Panc1 (cell line): ENCODE measurements at regions of chr3 and their contacts with region 1.

Region 1: DNA sequence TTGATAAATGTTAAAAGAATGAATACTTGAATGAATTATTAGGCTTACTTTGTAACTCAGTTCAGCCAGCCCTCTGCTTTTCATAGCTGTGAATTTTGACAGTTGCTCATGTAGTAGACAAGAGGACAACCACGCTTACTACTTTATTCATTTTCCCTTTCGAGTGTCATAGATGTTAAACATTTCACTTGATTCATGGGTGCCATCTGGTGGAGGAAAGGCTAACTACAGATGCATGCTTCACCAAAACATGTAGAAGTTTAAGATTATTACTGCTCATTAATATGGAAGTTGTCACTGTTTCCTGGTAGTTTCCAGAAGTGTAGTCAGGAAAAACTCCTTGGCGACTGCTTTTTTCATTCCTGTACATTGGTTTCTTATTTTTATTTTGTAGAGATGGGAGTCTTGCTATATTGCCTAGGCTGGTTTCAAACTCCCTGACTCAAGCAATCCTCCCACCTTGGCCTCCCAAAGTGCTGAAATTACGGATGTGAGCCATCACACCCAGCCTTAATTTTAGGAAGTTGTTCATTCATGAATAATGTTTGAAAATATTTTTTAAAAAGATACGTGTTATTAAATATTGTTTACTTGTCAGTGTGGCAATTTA is 163.2 kb downstream of the B3GALNT1 start:
- DNase-seq: peak; percentile 78
- ATAC-seq: peak; percentile 87
- H3K4me3 ChIP-seq: no peak overlapping the region
- H3K27ac ChIP-seq: no peak overlapping the region
- H3K4me1 ChIP-seq: no peaks in the 10 kb centered on the region
- H3K27me3 ChIP-seq: no peaks in the 10 kb centered on the region
- CTCF ChIP-seq: peak; percentile 83

Region 2: DNA sequence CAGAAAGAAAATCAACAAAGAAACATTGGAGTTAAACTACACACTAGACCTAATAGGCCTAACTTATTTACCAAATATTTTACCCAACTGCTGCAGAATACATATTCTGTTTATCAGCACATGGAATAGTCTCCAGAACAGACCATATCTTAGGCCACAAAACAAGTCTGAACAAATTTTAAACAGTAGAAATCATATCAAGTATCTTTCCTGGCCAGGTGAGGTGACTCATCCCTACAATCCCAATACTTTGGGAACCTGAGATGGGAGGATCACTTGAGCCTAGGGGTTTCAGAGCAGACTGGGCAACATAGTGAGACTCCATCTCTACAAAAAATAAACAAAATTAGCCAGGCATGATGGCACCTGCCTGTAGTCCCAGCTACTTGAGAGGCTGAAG is 358.5 kb before region 1 on chr3:
- CTCF ChIA-PET with region 1: no interaction called
- POLR2A ChIA-PET with region 1: no interaction called
- in situ Hi-C with region 1: no loop called
- intact Hi-C with region 1: loop called (anchors 5 kb)
- DNase-seq: no peak
- ATAC-seq: no peak
- H3K4me3 ChIP-seq: no peak overlapping the region
- H3K27ac ChIP-seq: no peak overlapping the region
- H3K4me1 ChIP-seq: no peaks in the 10 kb centered on the region
- H3K27me3 ChIP-seq: no peaks in the 10 kb centered on the region
- CTCF ChIP-seq: no peak

Region 3: DNA sequence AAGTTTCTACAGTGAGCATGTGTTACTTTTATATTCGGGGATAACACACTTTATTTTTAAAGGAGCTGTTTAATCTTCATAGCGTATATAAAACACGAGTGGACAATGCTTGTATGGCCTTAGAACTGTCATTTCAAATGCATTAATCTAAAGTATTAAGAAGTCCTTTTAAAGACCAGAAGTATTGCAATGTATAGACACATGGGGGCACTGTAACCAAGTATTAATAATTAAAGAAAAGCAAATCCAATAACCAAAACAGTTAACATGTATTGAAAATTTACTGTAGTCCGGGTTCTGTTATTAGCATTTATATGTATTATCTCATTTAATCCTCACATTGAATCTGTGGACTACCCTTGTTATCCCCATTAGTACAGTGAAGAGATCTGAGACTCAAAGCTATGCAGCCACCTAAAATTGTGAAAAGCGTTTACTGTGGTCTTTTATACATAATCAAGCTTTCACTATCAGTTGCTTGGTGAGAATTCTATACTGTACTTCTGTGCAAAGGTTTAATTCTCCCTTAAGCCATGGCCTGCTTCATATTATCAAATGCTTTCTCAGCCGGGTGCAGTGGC is 254.9 kb before region 1 on chr3:
- CTCF ChIA-PET with region 1: interaction called, 8 read pairs
- POLR2A ChIA-PET with region 1: no interaction called
- in situ Hi-C with region 1: no loop called
- intact Hi-C with region 1: loop called (anchors 5 kb)
- DNase-seq: no peak
- ATAC-seq: 0 out of 2 replicates have a peak, but pooled peaks have one; percentile 59
- H3K4me3 ChIP-seq: no peak overlapping the region
- H3K27ac ChIP-seq: no peak overlapping the region
- H3K4me1 ChIP-seq: peaks cover 9% of the 10 kb centered on the region; the same call in 1 of the 2 replicates
- H3K27me3 ChIP-seq: no peaks in the 10 kb centered on the region
- CTCF ChIP-seq: peak; percentile 60; the same call in 1 of the 2 replicates

Region 4: DNA sequence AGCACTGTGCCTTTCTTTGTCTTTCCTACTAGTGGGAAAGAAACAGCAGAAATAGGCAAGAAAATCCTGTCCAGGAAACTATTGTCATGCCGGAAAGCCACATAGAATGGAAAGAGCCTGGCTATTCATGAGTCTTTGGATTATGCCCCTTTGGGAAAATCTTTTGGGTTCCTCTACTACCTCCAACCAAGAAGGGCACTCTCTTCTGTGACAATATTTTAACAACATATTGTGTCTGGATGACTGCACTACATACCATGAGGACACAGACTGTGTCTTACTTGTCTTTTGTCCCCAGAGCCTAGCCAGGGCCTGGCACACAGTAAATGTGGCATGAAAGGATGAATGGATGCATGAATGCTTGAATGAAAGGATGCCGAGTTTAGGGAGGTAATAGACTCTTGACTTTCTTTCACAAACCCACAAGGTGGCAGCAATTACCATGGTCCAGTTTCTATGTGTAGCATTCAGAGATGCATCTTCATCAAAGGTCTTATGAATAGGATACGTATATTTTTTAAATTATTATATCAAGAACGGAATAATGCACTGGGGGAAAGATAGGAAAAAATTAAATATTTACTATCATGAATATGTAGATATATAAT is 234.7 kb before region 1 on chr3:
- CTCF ChIA-PET with region 1: interaction called, 4 read pairs
- POLR2A ChIA-PET with region 1: no interaction called
- in situ Hi-C with region 1: no loop called
- intact Hi-C with region 1: loop called (anchors 1 kb)
- DNase-seq: peak; percentile 38
- ATAC-seq: peak; percentile 97
- H3K4me3 ChIP-seq: no peak overlapping the region
- H3K27ac ChIP-seq: peak overlapping the region; percentile 3; the same call in 1 of the 2 replicates
- H3K4me1 ChIP-seq: no peaks in the 10 kb centered on the region
- H3K27me3 ChIP-seq: no peaks in the 10 kb centered on the region; the same call in 1 of the 2 replicates
- CTCF ChIP-seq: peak; percentile 81

Region 5: GRCh38 chr3:160801386-160802118 is 140.4 kb before region 1 on chr3:
- CTCF ChIA-PET with region 1: no interaction called
- POLR2A ChIA-PET with region 1: no interaction called
- in situ Hi-C with region 1: no loop called
- intact Hi-C with region 1: no loop called
- DNase-seq: no peak
- ATAC-seq: peak; percentile 64
- H3K4me3 ChIP-seq: no peak overlapping the region
- H3K27ac ChIP-seq: peak overlapping the region; percentile 60
- H3K4me1 ChIP-seq: peaks cover 18% of the 10 kb centered on the region
- H3K27me3 ChIP-seq: no peaks in the 10 kb centered on the region
- CTCF ChIP-seq: no peak

Region 6: DNA sequence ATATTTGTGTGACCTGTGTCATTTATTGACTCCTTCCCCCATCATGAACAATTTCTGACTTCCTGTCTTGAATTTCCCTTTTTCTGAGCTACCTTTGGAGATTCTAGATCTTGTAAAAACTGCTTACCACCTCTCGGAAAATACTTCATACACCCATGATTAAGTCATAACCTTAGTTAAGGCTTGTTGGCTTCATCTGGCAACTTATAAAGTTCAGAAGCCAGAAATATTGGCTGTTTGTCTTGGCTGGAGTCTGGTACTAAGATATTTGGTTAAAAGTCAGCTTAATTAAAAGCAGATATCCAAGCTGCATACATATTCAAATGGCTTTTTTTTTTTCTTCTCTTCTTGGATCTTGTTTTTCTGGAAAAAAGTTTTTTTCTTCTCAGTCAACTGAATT is 200.5 kb after region 1 on chr3:
- CTCF ChIA-PET with region 1: no interaction called
- POLR2A ChIA-PET with region 1: no interaction called
- in situ Hi-C with region 1: no loop called
- intact Hi-C with region 1: no loop called
- DNase-seq: no peak
- ATAC-seq: no peak
- H3K4me3 ChIP-seq: no peak overlapping the region
- H3K27ac ChIP-seq: no peak overlapping the region
- H3K4me1 ChIP-seq: no peaks in the 10 kb centered on the region
- H3K27me3 ChIP-seq: no peaks in the 10 kb centered on the region
- CTCF ChIP-seq: no peak